ENCODE measurements at regions of chr2 and their contacts with region 1.

Region 1: GRCh38 chr2:86105252-86105968 is at the start of gene POLR1A:
- DNase-seq: peak; percentile 89
- H3K4me3 Mint-ChIP-seq: peak within 1 kb of the TSS; percentile 84
- H3K27ac Mint-ChIP-seq: peak within 1 kb of the TSS; percentile 99
- H3K4me1 Mint-ChIP-seq: peaks cover 54% of the 10 kb centered on the region
- H3K27me3 Mint-ChIP-seq: no peaks in the 10 kb centered on the region
- total RNA-seq, gene POLR1A: 34.5 to 36.6 TPM

Region 2: GRCh38 chr2:86118133-86118532 is 12.7 kb after region 1 on chr2:
- CTCF ChIA-PET with region 1: interaction called, 10 read pairs
- POLR2A ChIA-PET with region 1: no interaction called
- DNase-seq: no peak
- H3K4me3 Mint-ChIP-seq: no peak overlapping the region
- H3K27ac Mint-ChIP-seq: no peak overlapping the region
- H3K4me1 Mint-ChIP-seq: peaks cover 3% of the 10 kb centered on the region
- H3K27me3 Mint-ChIP-seq: no peaks in the 10 kb centered on the region

Measured in activated CD4-positive, alpha-beta T cell treated with anti-CD3 and anti-CD28 coated beads, Interleukin-2, amount 10 ng/mL, durations not matched to agents 7 days and 5 days (primary cell).